ENCODE measurements at regions of chr11 and their contacts with region 1.

Region 1: GRCh38 chr11:20934516-20934915 is 265.1 kb downstream of the NELL1 start:
- DNase-seq: no peak
- ATAC-seq: no peak
- H3K4me3 ChIP-seq: no peak overlapping the region
- H3K4me3 Mint-ChIP-seq: no peak overlapping the region
- H3K27ac ChIP-seq: no peak overlapping the region
- H3K27ac Mint-ChIP-seq: no peak overlapping the region
- H3K4me1 ChIP-seq: no peaks in the 10 kb centered on the region
- H3K4me1 Mint-ChIP-seq: no peaks in the 10 kb centered on the region
- H3K27me3 ChIP-seq: no peaks in the 10 kb centered on the region
- H3K27me3 Mint-ChIP-seq: no peaks in the 10 kb centered on the region
- CTCF ChIP-seq: no peak

Region 2: GRCh38 chr11:20881328-20882079 is 53.0 kb before region 1 on chr11:
- intact Hi-C with region 1: no loop called
- DNase-seq: no peak
- ATAC-seq: no peak
- H3K4me3 ChIP-seq: no peak overlapping the region
- H3K4me3 Mint-ChIP-seq: no peak overlapping the region
- H3K27ac ChIP-seq: no peak overlapping the region
- H3K27ac Mint-ChIP-seq: no peak overlapping the region
- H3K4me1 ChIP-seq: no peaks in the 10 kb centered on the region
- H3K4me1 Mint-ChIP-seq: no peaks in the 10 kb centered on the region
- H3K27me3 ChIP-seq: no peaks in the 10 kb centered on the region
- H3K27me3 Mint-ChIP-seq: no peaks in the 10 kb centered on the region
- CTCF ChIP-seq: no peak

Region 3: GRCh38 chr11:21072558-21072957 is 138.0 kb after region 1 on chr11:
- intact Hi-C with region 1: no loop called
- DNase-seq: no peak
- ATAC-seq: no peak
- H3K4me3 ChIP-seq: no peak overlapping the region
- H3K4me3 Mint-ChIP-seq: no peak overlapping the region
- H3K27ac ChIP-seq: no peak overlapping the region
- H3K27ac Mint-ChIP-seq: no peak overlapping the region
- H3K4me1 ChIP-seq: no peaks in the 10 kb centered on the region
- H3K4me1 Mint-ChIP-seq: no peaks in the 10 kb centered on the region
- H3K27me3 ChIP-seq: no peaks in the 10 kb centered on the region
- H3K27me3 Mint-ChIP-seq: no peaks in the 10 kb centered on the region
- CTCF ChIP-seq: no peak

Region 4: GRCh38 chr11:21323617-21324016 is 389.1 kb after region 1 on chr11:
- intact Hi-C with region 1: loop called (anchors 5 kb)
- DNase-seq: no peak
- ATAC-seq: no peak
- H3K4me3 ChIP-seq: no peak overlapping the region
- H3K4me3 Mint-ChIP-seq: no peak overlapping the region
- H3K27ac ChIP-seq: no peak overlapping the region
- H3K27ac Mint-ChIP-seq: no peak overlapping the region
- H3K4me1 ChIP-seq: no peaks in the 10 kb centered on the region
- H3K4me1 Mint-ChIP-seq: no peaks in the 10 kb centered on the region
- H3K27me3 ChIP-seq: no peaks in the 10 kb centered on the region
- H3K27me3 Mint-ChIP-seq: no peaks in the 10 kb centered on the region
- CTCF ChIP-seq: no peak

Measured in natural killer cell (primary cell).